ENCODE measurements at regions of chr17 and their contacts with region 1.

Region 1: GRCh38 chr17:43211480-43212402 is at the start of gene TMEM106A:
- DNase-seq: peak in 1 of 2 donors; percentile 90
- H3K4me3 ChIP-seq: peak within 1 kb of the TSS; percentile 60 to 78
- H3K27ac ChIP-seq: peak within 1 kb of the TSS; percentile 87
- H3K4me1 ChIP-seq: peaks cover 23% of the 10 kb centered on the region
- H3K27me3 ChIP-seq: no peaks in the 10 kb centered on the region
- CTCF ChIP-seq: no peak
- POLR2A ChIP-seq: no peak
- total RNA-seq, gene TMEM106A: 6.6 TPM

Region 2: DNA sequence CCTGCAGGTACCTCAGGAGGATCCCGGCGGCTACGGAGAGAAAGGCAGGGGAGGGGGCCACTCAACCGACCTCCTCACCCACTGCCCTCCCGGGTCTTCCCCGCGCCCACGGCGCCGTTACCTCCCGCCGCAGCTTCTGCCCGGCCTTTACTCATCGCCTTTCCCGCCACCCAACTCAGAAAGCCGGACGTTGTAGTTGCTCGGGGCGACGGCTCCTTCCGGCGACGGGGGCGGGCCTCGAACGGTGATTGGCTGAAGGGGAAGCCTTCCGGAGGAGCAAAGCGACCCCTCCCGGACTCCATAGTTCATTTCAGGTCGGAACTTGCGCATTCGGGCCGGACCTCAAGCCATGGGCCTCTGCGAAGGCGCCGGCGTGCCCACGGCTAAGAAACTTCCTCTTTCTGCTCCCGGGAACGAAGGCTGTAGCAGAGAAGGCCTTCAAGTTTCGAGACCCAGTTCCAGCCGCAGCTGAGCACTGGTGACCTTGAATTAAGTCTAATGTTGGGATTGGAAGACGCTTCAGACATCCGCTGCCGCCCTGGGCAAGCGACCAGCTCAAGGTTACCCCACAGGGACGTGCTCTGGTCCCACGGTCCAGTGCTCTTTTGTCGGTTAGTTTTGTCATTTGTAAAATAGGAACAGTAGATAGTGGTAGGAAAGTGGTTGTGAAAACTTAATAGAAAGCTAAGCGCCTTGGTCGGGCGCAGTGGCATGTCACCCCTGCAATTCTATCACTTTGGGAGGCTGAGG is 634.0 kb before region 1 on chr17 and contains the start of gene PSMC3IP:
- intact Hi-C with region 1: no loop called
- DNase-seq: peak in 1 of 2 donors; percentile 96
- H3K4me3 ChIP-seq: peak within 1 kb of the TSS; percentile 59 to 66
- H3K27ac ChIP-seq: peak within 1 kb of the TSS; percentile 75
- H3K4me1 ChIP-seq: peaks cover 21% of the 10 kb centered on the region
- H3K27me3 ChIP-seq: no peaks in the 10 kb centered on the region
- CTCF ChIP-seq: peak in 2 of 3 experiments; percentile 14 to 25
- POLR2A ChIP-seq: peak in 1 of 2 donors; percentile 56
- total RNA-seq, gene PSMC3IP: 0.98 TPM

Region 3: GRCh38 chr17:43338886-43339516 is 127.3 kb after region 1 on chr17:
- intact Hi-C with region 1: loop called (anchors 10 kb)
- DNase-seq: no peak
- H3K4me3 ChIP-seq: no peak overlapping the region
- H3K27ac ChIP-seq: no peak overlapping the region
- H3K4me1 ChIP-seq: peaks cover 3% of the 10 kb centered on the region
- H3K27me3 ChIP-seq: no peaks in the 10 kb centered on the region
- CTCF ChIP-seq: peak; percentile 35 to 41 (median 40)
- POLR2A ChIP-seq: no peak

Measured in vagina (tissue), 2 donors.